ENCODE measurements at regions of chr16 and their contacts with region 1.

Region 1: GRCh38 chr16:4200000-4200780 is 41.7 kb downstream of the SRL start:
- DNase-seq: peak; percentile 62 to 79
- ATAC-seq: peak; percentile 99

Region 2: GRCh38 chr16:4244254-4245076 is 44.3 kb after region 1 on chr16:
- intact Hi-C with region 1: loop called in 1 of 2 experiments (anchors 10 kb)
- DNase-seq: no peak
- ATAC-seq: peak; percentile 74

Region 3: DNA sequence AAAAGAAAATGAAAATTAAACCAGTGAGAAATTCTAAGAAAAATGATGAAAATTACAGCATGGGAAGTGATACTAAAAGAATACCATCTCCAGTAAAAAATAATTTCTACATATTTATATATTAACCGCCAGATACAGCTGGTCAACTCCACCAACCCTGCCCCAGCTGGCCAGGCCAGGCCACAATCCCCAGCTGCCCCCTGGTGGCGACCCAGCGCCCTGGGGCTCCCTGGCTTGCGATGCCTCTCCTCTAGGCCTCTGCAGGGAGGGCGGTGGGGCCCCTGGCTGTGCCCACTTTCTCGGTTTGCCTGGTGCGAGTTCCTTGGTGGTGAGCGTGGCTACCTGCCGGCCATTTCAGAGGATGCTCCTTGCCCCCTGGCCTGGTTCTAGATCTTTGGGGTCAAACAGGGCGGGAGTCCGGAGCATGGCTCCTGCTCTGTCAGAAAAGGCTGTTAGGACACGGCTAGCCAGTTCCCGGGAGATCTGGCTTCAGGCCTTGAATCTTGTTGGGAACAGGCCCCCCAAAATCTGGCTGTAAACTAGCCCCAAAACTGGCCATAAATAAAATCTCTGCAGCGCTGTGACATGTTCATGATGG is 130.2 kb after region 1 on chr16:
- intact Hi-C with region 1: loop called in 1 of 2 experiments (anchors 10 kb)
- DNase-seq: peak; percentile 63 to 87
- ATAC-seq: peak; percentile 83